PC-9 (cell line): ENCODE measurements at regions of chr3 and their contacts with region 1.

Region 1: GRCh38 chr3:32420126-32421038 is 28.7 kb downstream of the CMTM7 start:
- DNase-seq: peak; percentile 92 to 93
- H3K4me3 ChIP-seq: peak overlapping the region; percentile 48; the same call in 1 of the 2 replicates
- H3K27ac ChIP-seq: peak overlapping the region; percentile 99
- H3K4me1 ChIP-seq: peaks cover 51% of the 10 kb centered on the region
- H3K27me3 ChIP-seq: no peaks in the 10 kb centered on the region
- CTCF ChIP-seq: peak; percentile 25; the same call in 1 of the 2 replicates

Region 2: GRCh38 chr3:31341130-31341529 is 1079.3 kb before region 1 on chr3:
- CTCF ChIA-PET with region 1: no interaction called
- POLR2A ChIA-PET with region 1: no interaction called
- intact Hi-C with region 1: no loop called
- DNase-seq: no peak
- H3K4me3 ChIP-seq: no peak overlapping the region
- H3K27ac ChIP-seq: no peak overlapping the region
- H3K4me1 ChIP-seq: no peaks in the 10 kb centered on the region
- H3K27me3 ChIP-seq: no peaks in the 10 kb centered on the region
- CTCF ChIP-seq: no peak

Region 3: GRCh38 chr3:32238453-32239306 is 181.7 kb before region 1 on chr3 and contains the start of gene CMTM8:
- CTCF ChIA-PET with region 1: interaction called, 10 read pairs
- POLR2A ChIA-PET with region 1: no interaction called
- intact Hi-C with region 1: loop called (anchors 5 kb)
- DNase-seq: peak; percentile 37 to 70
- H3K4me3 ChIP-seq: peak within 1 kb of the TSS; percentile 72
- H3K27ac ChIP-seq: no peak within 1 kb of the TSS
- H3K4me1 ChIP-seq: peaks cover 17% of the 10 kb centered on the region; the same call in 1 of the 2 replicates
- H3K27me3 ChIP-seq: no peaks in the 10 kb centered on the region
- CTCF ChIP-seq: no peak
- total RNA-seq, gene CMTM8: 16.8 and 17.8 TPM in 2 replicates

Region 4: GRCh38 chr3:32391643-32392535 is 28.5 kb before region 1 on chr3 and contains the start of gene CMTM7:
- CTCF ChIA-PET with region 1: no interaction called
- POLR2A ChIA-PET with region 1: no interaction called
- intact Hi-C with region 1: loop called (anchors 1 kb)
- DNase-seq: peak; percentile 54 to 85
- H3K4me3 ChIP-seq: peak within 1 kb of the TSS; percentile 71
- H3K27ac ChIP-seq: peak within 1 kb of the TSS; percentile 44
- H3K4me1 ChIP-seq: 0 out of 2 replicates have a peak, but pooled peaks cover 6% of the 10 kb centered on the region
- H3K27me3 ChIP-seq: no peaks in the 10 kb centered on the region
- CTCF ChIP-seq: no peak
- total RNA-seq, gene CMTM7: 37.1 and 51.6 TPM in 2 replicates

Region 5: DNA sequence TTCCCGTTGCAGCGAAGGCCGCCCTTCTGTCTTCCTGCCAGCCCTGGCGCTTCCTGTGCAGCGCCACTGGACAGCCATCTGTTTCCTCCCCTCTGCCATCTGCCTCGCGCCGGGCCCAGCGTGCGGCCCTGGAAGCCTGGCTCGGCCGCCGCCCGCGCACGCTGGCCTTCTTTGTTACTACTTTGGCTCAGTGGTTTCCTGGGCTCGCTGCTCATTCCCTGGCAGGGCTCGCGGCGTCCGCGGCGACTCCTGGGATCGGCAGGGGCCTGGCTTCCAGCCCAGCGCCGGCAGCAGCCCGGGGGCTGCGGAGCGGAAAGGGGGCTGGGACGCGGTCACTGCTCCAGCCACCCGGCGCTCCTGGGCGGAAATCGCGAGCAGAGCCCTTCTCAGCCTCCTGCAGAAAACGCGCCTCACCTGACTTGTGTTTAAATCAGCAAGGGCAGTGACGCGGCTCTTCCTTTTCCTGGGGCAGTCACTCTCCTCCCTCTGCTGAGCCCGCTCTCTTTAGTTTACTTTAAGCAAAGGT is 18.8 kb before region 1 on chr3:
- CTCF ChIA-PET with region 1: no interaction called
- POLR2A ChIA-PET with region 1: no interaction called
- intact Hi-C with region 1: loop called (anchors 1 kb)
- DNase-seq: peak; percentile 53 to 67
- H3K4me3 ChIP-seq: peak overlapping the region; percentile 58
- H3K27ac ChIP-seq: peak overlapping the region; percentile 83
- H3K4me1 ChIP-seq: peaks cover 21% of the 10 kb centered on the region
- H3K27me3 ChIP-seq: no peaks in the 10 kb centered on the region
- CTCF ChIP-seq: no peak

Region 6: GRCh38 chr3:32443478-32443877 is 23.1 kb after region 1 on chr3:
- CTCF ChIA-PET with region 1: no interaction called
- POLR2A ChIA-PET with region 1: interaction called, 14 read pairs
- intact Hi-C with region 1: loop called (anchors 1 kb)
- DNase-seq: peak; percentile 26 to 86
- H3K4me3 ChIP-seq: no peak overlapping the region
- H3K27ac ChIP-seq: peak overlapping the region; percentile 89
- H3K4me1 ChIP-seq: peaks cover 20% of the 10 kb centered on the region
- H3K27me3 ChIP-seq: no peaks in the 10 kb centered on the region
- CTCF ChIP-seq: no peak

Region 7: DNA sequence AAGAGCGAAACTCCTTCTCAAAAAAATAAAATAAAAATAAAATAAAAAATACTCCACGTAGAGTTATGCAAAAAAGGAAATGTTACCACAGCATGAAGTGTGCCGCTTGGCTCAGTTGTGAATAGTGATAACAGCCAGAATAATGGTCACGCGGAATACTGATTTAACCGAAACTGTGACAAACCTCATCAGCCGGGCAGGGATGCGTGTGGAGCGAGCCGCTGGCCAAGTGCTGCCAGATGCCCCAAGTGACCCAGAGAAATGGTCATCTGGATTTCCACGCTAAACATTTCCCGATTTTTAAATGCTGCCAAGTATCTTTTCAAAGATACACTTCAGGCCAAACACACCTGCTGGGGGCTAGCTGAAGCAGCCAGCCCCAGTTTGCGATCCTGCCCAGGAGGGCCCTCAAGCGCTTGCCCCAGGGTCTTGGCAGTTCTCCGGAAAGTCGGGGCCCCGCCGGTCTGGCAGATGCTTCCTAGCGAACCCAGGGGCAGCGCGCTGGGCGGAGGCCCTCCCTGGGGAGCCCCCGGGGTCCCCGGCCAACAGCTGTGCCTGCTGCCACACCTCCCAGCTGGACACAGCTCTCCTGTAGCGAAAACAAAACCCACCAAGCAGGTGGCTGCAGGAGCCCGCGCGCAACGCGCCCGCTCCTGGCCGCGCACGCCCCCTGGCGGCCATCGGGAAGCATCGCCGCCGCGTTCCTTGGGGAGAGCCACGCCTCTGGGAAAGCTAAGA is 47.1 kb after region 1 on chr3:
- CTCF ChIA-PET with region 1: interaction called, 4 read pairs
- POLR2A ChIA-PET with region 1: interaction called, 9 read pairs
- intact Hi-C with region 1: loop called (anchors 1 kb)
- DNase-seq: peak; percentile 42 to 73
- H3K4me3 ChIP-seq: no peak overlapping the region
- H3K27ac ChIP-seq: no peak overlapping the region
- H3K4me1 ChIP-seq: peaks cover 21% of the 10 kb centered on the region
- H3K27me3 ChIP-seq: no peaks in the 10 kb centered on the region
- CTCF ChIP-seq: peak; percentile 80

Region 8: DNA sequence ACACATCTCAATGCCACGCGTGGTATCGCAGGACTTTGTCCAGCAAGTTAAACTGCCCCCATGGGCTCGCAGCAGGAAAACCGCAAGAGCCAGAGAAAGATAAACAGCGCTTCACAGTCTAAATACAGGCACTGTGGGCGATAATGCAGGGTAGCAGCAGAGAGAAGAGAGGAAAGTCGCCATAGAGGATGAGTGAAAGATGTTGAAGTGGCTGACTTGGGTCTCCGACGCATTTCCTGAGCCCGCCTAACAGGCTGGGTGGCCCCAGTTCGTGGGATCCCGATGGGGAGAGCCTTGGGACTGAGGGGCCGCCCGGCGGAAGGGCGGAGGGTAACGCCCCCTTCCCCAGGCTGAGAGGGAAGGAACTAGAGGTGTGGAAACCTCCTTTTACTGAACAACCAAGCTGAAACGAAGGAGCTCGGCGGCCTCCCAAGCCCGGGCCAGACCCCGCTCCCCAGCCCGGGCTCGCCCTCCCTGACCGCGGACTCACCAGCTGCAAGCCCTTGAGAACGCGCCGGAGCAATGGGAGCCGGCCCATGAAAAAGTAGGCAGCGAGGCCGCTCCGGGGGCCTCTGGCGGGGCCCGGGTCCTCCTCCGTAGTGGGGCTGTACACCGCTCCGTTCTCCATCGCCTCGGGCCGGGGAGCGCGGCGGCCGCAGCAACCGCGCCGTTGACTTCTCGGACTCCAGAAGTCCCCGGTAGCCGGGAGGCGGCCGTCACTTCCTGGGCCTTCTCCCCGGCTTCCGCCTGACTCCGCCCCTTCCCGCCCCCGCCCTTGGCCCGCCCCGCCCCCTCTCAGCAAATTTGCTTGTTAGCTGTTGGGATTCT is 82.0 kb after region 1 on chr3 and contains the start of gene CMTM6:
- CTCF ChIA-PET with region 1: interaction called, 14 read pairs
- POLR2A ChIA-PET with region 1: no interaction called
- intact Hi-C with region 1: no loop called
- DNase-seq: peak; percentile 39 to 67
- H3K4me3 ChIP-seq: peak within 1 kb of the TSS; percentile 79
- H3K27ac ChIP-seq: peak within 1 kb of the TSS; percentile 51
- H3K4me1 ChIP-seq: peaks cover 8% of the 10 kb centered on the region; the same call in 1 of the 2 replicates
- H3K27me3 ChIP-seq: no peaks in the 10 kb centered on the region
- CTCF ChIP-seq: no peak
- total RNA-seq, gene CMTM6: 61.0 and 69.4 TPM in 2 replicates

Region 9: DNA sequence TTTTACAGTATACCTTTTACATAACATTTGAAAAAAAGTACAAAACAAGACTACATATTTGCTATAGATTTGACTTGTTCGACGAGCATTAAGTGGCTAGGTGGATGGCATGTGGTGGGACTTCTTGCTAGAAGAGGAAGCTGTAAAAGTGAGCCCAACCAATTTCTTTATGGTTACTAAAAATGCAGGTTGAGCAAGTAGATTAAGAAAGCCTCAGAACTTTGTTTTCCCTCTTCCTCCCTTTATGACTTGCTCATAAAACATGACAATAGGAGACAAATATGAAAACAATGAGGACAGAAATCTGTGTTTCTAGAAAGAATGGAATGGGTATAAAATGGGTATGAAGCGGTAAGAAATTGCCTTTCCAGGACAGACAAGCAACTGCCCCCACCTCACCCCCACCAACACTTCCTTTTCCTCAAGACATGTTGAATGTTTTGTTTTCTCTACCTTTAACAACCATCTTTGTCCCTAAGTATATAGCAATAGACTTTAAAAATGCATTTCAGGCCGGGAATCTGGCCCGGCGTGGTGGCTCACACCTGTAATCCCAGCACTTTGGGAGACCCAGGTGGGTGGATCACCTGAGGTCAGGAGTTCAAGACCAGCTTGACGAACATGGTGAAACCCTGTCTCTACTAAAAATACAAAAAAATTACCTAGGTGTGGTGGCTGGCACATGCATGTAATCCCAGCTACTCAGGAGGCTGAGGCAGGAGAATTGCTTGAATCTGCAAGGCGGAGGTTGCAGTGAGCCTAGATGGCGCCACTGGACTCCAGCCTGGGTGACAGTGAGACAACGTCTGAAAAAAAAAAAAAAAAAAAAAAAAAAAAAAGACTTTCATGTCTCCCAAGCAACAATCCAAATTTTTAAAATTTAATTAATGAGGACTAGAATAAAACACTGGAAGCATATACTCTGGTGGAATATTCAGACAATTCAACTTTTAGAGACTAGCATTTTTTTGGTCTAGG is 481.3 kb after region 1 on chr3:
- CTCF ChIA-PET with region 1: no interaction called
- POLR2A ChIA-PET with region 1: no interaction called
- intact Hi-C with region 1: no loop called
- DNase-seq: peak in 1 of 2 experiments; percentile 27
- H3K4me3 ChIP-seq: peak overlapping the region; percentile 49; the same call in 1 of the 2 replicates
- H3K27ac ChIP-seq: no peak overlapping the region
- H3K4me1 ChIP-seq: no peaks in the 10 kb centered on the region
- H3K27me3 ChIP-seq: no peaks in the 10 kb centered on the region
- CTCF ChIP-seq: no peak; the same call in 1 of the 2 replicates